Activated CD8-positive, alpha-beta T cell treated with anti-CD3 and anti-CD28 coated beads, Interleukin-2, amount 10 ng/mL, durations not matched to agents 7 days and 5 days (primary cell): ENCODE measurements at regions of chr6 and their contacts with region 1.

Region 1: DNA sequence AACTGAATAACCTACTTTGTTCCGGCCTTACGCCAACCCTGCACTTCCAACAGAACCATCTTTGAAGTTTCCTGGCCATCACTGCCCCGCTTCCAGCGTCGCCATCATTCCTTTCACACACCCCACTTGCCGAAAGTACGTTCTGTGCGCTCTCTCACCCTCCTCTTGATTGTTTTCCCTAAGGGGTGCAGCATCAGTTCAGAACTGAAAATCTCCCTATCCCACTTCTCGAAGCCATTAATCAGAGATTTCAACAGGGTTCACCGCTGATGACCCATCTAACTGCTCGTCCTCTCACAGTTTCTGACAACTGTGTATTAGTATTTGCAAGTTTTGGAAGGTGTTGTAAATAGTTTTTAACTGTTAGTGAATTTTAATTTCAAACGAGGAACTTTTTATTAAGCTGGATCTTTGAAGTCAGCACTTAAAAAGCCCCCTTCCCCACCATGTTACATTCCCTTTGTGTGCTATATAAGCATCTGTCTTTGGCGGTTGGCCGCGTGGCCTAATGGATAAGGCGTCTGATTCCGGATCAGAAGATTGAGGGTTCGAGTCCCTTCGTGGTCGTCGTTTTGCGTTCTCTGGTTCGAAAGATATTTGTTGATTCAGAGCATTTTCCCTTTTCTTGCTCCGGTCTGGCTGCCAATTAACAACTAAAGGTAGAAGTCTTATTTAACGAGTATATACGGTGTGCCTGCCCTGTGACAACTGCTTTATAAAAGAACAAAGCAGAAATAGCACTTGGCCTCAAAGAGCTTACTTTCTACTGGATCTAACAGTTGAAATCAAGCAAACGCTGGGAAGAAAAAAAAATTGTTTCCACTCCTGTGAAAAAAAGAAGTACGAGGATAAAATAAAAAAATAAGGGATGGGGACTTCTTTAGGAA is 42.6 kb downstream of the TRIM27 start:
- DNase-seq: peak; percentile 76
- ATAC-seq: no peak
- H3K4me3 Mint-ChIP-seq: peak overlapping the region; percentile 74
- H3K27ac Mint-ChIP-seq: peak overlapping the region; percentile 73
- H3K4me1 Mint-ChIP-seq: peaks cover 45% of the 10 kb centered on the region
- H3K27me3 Mint-ChIP-seq: peaks cover 21% of the 10 kb centered on the region

Region 2: DNA sequence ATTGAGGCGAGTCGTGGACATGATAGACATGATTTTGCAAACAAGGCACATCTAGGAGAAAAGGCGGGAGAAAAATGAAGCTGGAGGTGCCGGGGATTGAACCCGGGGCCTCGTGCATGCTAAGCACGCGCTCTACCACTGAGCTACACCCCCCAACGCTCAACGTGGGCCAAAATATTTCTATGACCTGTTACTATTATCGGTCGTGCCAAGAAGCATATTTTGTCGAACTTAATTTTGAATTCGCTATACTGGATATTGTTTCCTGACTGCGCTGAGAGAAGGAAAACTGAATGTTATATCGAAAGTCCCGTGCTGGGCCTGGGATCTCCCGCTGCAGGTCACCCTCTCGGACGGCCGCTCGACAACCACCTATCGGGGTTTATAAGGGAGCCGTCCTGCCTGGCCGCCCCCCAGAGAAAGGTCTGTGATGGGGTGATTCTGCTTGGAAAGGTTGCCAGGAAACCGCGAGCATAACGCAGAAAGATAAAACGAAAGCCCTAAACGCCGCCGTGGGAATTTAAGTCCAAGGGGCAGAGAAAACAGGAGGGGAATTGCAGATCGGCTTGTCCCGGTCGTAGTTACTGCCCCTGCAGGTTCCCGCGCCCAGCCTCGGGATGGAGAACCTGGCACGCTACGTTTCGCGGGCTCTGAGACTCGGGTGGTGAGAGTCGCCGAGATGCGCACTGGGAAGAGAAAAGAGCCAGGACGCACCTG is 17.4 kb before region 1 on chr6:
- CTCF ChIA-PET with region 1: interaction called, 13 read pairs
- POLR2A ChIA-PET with region 1: interaction called, 38 read pairs
- DNase-seq: peak; percentile 90
- ATAC-seq: peak; percentile 47
- H3K4me3 Mint-ChIP-seq: peak overlapping the region; percentile 89
- H3K27ac Mint-ChIP-seq: peak overlapping the region; percentile 81
- H3K4me1 Mint-ChIP-seq: peaks cover 53% of the 10 kb centered on the region
- H3K27me3 Mint-ChIP-seq: peaks cover 7% of the 10 kb centered on the region

Region 3: GRCh38 chr6:28895134-28895812 is 14.1 kb after region 1 on chr6:
- CTCF ChIA-PET with region 1: interaction called, 22 read pairs
- POLR2A ChIA-PET with region 1: interaction called, 59 read pairs
- DNase-seq: peak; percentile 97
- ATAC-seq: peak; percentile 84
- H3K4me3 Mint-ChIP-seq: peak overlapping the region; percentile 92
- H3K27ac Mint-ChIP-seq: peak overlapping the region; percentile 98
- H3K4me1 Mint-ChIP-seq: peaks cover 12% of the 10 kb centered on the region
- H3K27me3 Mint-ChIP-seq: peaks cover 6% of the 10 kb centered on the region